ENCODE measurements at regions of chr18 and their contacts with region 1.

Region 1: GRCh38 chr18:79679111-79679872 is at the start of gene CTDP1:
- DNase-seq: peak; percentile 100
- ATAC-seq: peak; percentile 99
- total RNA-seq, gene CTDP1: 8.4 TPM

Region 2: DNA sequence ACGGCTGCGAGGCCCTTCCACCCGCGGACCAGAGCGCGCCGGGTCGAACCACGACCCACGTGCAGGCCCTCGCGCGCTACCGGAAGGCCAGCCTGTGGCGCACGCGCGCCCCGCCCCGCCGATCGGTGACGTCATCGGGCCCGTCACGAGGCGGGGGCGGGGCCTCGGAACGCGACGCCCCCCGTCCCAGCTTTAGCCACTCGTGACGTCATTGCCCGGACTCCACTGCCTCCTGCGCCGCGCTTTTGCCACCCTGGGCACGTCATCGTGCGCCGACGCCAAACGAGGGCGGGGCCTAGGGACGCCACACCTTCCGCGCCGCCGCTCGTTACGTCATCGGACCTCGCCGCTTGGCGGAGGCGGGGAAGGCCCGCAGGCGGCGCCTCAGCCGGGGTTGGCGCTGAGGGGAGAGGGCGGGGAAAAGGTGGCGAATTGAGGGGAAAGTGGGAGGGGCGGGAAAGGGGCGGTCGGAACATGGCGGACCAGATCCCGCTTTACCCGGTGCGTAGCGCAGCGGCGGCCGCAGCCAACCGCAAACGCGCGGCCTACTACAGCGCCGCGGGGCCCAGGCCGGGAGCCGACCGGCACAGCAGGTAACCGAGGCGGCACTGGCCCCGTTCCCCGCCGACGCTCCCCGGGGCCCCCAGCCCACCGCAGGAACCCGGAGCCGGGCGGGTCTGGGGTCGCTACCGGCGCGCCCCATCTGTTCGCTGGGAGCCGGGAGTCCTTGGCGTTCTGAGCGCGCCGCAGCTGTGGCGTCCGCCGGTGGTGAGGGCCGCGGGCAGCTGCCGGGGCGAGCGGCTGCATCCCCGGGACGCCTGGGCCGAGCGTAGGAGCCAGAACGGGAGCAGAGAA is 610.1 kb before region 1 on chr18 and contains the start of gene ATP9B:
- intact Hi-C with region 1: loop called (anchors 5 kb)
- DNase-seq: peak; percentile 98
- ATAC-seq: peak; percentile 97
- total RNA-seq, gene ATP9B: 11.7 TPM

Region 3: DNA sequence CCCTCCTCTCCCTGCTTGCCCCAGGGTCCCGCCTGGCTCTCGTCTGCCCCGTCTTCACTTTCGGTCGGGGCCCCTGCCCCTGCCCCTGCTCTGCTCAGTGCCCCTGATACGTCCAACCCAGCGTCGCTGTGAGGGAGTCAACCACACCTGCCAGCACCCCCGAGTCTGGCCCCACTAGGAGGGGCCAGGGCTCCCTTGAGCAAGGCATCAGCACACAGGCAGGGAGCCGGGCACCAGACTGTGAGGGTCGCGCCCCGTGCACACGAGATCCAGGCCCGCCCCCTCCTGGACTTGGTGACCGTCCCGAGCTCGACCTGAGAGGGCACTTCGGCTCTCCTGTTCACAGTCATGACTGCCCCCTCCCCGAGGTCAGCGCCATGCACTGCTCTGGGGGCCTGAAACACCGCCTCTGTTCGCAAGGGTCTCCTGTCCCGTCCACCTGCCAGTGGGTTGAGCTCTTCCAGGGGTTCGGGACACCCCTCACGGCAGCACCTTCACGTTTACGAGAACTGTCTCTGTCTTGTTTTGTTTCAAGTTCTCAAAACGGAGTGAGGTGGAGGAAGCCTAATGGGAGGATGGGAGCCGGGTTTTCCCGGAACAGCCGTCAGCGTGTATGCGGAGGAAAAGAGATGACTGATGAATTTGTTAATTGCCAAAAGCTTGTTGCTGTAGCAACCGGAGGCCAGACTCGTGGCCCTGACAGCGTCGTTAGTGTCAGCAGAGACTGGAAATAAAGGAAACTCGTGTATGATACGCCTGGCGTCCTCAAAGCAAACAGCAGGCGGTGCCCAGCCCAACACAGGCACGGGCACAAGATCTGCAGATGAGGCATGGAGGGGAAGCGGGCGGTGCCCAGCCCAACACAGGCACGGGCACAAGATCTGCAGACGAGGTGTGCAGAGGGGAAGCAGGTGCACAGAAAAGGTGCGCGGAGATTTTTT is 70.2 kb after region 1 on chr18:
- intact Hi-C with region 1: no loop called
- DNase-seq: no peak
- ATAC-seq: no peak

Region 4: DNA sequence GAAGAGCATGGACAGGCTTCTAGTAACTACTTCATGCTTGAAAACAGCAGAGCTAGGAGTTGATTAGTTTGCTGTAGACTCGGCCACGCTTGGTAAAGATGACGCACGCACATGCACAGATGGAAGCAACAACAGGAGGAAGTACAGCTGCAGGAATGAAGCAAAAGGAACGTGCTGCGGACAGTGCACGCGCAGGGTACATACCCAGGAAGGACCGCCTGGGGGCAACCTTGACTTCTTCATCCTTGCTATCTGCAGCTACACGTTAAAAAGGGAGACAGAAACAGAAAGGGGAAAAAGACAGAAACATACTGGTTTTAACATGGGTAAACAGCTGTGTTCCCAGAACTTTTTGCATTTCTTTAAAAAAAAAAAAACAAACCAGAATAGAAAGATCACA is 254.5 kb after region 1 on chr18:
- intact Hi-C with region 1: loop called (anchors 10 kb)
- DNase-seq: no peak
- ATAC-seq: peak; percentile 35

Region 5: DNA sequence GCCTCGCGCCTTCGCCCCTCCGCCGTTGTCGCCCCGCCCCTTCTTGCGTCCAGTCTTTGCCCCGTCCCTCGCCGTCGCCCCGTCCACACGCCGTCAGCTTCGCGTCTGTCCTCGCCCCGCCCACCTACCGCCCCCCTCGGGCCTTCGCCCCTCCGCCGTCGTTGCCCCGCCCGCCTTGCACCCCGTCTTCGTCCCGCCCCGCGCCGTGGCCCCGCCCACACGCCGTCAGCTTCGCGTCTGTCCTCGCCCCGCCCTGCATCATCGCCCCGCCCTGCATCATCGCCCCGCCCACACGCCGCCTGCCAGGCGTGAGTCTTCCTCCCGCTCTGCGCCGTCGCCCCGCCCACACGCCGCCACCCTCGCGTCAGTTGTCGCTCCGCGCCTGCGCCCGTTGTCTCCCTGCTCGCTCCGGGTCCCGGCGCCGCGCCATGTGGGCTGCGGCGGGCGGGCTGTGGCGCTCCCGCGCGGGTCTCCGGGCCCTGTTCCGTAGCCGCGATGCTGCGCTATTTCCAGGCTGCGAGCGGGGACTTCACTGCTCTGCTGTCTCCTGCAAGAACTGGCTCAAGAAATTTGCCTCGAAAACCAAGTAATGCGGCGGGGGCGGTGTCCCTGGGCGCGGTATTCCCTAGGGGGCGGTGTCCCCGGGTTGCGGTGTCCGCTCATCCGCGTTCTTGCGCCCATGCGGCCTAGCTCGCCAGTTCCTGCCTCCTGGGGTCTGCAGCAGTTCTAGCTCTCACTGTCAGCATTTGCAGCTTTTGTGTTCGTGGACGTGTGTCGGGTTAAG is 355.0 kb after region 1 on chr18 and contains the start of gene RBFA:
- intact Hi-C with region 1: loop called (anchors 5 kb)
- DNase-seq: peak; percentile 100
- ATAC-seq: peak; percentile 97
- total RNA-seq, gene RBFA: 25.3 TPM

Measured in Right ventricle myocardium inferior (tissue), 1 donor.